A673 (cell line): ENCODE measurements at regions of chr3 and their contacts with region 1.

Region 1: GRCh38 chr3:46695962-46696894 is 2.7 kb upstream of the ALS2CL start:
- DNase-seq: no peak
- H3K4me3 ChIP-seq: no peak overlapping the region
- H3K27ac ChIP-seq: no peak overlapping the region
- H3K4me1 ChIP-seq: no peaks in the 10 kb centered on the region
- H3K27me3 ChIP-seq: no peaks in the 10 kb centered on the region
- CTCF ChIP-seq: no peak

Region 2: DNA sequence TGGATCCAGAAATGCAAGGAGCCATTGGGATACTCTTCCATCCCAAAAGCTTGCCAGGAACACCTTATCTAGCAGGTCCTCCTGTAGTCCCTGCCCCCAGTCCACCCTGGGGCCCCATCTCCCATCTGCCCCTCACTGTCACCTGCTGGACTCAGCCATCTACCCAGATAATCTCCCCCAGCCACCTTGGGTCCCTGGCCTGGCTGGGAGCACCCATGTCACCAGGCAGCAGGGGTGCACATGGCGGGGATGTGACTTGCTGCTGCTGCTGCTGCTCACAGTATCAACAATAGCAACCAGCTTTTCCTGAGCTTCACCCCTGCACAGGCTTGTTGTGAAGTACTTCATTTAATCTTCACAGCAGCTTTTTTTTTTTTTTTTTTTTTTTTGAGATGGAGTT is 193.9 kb after region 1 on chr3:
- CTCF ChIA-PET with region 1: no interaction called
- POLR2A ChIA-PET with region 1: interaction called, 13 read pairs
- intact Hi-C with region 1: no loop called
- DNase-seq: peak; percentile 26
- H3K4me3 ChIP-seq: no peak overlapping the region
- H3K27ac ChIP-seq: no peak overlapping the region
- H3K4me1 ChIP-seq: peaks cover 6% of the 10 kb centered on the region
- H3K27me3 ChIP-seq: no peaks in the 10 kb centered on the region
- CTCF ChIP-seq: no peak